HEK293 (cell line): ENCODE measurements at regions of chr1 and their contacts with region 1.

Region 1: DNA sequence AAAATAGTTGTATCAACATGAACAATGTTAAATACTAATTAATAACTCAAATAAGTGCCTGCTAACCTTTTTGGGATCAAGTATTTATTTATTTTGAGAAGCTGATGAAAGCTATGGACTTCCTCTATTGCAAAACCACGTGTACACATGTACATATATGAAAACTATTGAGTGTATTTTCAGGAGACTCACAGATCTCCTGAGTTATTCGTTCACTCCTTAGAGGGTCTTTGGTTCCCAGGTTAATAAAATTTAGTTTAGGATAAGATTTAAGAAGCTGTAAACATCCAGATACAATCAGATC is 130.5 kb downstream of the DISC1 start:
- H3K4me3 ChIP-seq: no peak overlapping the region
- H3K27ac ChIP-seq: no peak overlapping the region
- H3K4me1 ChIP-seq: no peaks in the 10 kb centered on the region
- CTCF ChIP-seq: no peak

Region 2: GRCh38 chr1:231686384-231686783 is 70.7 kb before region 1 on chr1:
- CTCF ChIA-PET with region 1: no interaction called
- POLR2A ChIA-PET with region 1: no interaction called
- H3K4me3 ChIP-seq: no peak overlapping the region
- H3K27ac ChIP-seq: no peak overlapping the region
- H3K4me1 ChIP-seq: no peaks in the 10 kb centered on the region
- CTCF ChIP-seq: no peak

Region 3: GRCh38 chr1:231734417-231734816 is 22.6 kb before region 1 on chr1:
- CTCF ChIA-PET with region 1: interaction called, 23 read pairs
- POLR2A ChIA-PET with region 1: no interaction called
- H3K4me3 ChIP-seq: no peak overlapping the region
- H3K27ac ChIP-seq: no peak overlapping the region
- H3K4me1 ChIP-seq: no peaks in the 10 kb centered on the region
- CTCF ChIP-seq: no peak

Region 4: DNA sequence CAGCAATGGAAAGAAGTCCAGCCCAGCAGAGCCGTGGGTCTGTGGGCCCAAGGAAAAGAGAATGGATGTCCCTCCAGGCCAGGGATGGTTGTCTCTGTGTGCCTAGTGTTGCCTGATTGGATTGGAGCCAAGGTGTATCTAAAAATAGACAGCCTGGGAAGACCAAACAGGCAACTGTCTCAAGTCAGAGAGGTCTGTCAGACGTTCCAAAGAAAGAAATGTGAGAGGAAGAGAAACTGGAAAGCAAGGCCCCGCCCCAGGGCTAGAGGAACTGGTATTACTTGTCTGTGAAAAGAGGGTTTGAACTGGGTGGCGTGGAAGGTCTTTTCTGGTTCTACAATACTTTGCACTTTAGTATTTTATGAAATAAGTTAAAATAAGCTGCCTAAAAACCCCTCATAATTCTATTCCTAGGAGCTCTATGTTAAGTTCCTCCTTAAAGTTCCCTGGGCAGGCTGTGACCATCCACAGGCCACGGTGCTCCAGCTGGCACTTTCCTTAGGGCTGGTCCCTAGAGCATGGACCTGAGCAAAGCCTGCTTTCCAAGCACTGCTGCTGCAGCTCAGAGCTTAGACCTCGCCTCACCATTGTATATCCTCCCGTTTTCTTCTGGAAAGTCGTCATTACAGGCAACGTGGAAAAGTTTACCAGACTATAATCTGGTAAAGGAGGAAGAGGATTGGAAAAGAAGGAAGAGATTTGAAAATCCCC is 21.1 kb after region 1 on chr1:
- CTCF ChIA-PET with region 1: interaction called, 28 read pairs
- POLR2A ChIA-PET with region 1: no interaction called
- H3K4me3 ChIP-seq: no peak overlapping the region
- H3K27ac ChIP-seq: no peak overlapping the region
- H3K4me1 ChIP-seq: peaks cover 8% of the 10 kb centered on the region
- CTCF ChIP-seq: no peak

Region 5: GRCh38 chr1:231800108-231800507 is 43.1 kb after region 1 on chr1:
- CTCF ChIA-PET with region 1: interaction called, 26 read pairs
- POLR2A ChIA-PET with region 1: no interaction called
- H3K4me3 ChIP-seq: no peak overlapping the region
- H3K27ac ChIP-seq: no peak overlapping the region
- H3K4me1 ChIP-seq: no peaks in the 10 kb centered on the region
- CTCF ChIP-seq: no peak

Region 6: DNA sequence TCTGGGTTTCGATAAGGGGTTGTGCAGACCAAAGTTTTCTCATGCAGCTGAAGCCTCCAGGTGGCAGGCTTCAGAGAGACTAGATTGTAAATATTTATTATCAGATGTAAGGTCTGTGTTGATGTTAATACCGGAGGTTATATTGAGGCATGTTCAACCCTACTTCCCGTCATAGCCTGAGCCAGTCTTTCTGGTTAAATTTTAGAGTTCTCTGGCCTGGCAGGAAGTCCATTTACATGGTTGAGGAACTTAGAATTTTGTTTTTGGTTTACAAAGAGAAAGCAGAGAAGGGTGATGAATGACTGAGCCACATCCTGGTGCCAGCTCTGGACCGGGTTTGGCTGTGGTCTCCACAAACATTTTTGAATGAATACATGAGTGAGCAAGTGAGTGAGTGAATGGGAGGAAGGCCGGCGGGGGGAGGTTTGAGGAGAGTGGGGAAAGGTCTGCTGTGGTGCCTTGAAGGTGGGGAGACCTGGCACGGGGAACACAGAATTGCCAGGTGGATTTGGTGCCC is 88.0 kb after region 1 on chr1:
- CTCF ChIA-PET with region 1: interaction called, 11 read pairs
- POLR2A ChIA-PET with region 1: no interaction called
- H3K4me3 ChIP-seq: no peak overlapping the region
- H3K27ac ChIP-seq: no peak overlapping the region
- H3K4me1 ChIP-seq: no peaks in the 10 kb centered on the region
- CTCF ChIP-seq: no peak